AG04450 (cell line): ENCODE measurements at regions of chr14 and their contacts with region 1.

Region 1: DNA sequence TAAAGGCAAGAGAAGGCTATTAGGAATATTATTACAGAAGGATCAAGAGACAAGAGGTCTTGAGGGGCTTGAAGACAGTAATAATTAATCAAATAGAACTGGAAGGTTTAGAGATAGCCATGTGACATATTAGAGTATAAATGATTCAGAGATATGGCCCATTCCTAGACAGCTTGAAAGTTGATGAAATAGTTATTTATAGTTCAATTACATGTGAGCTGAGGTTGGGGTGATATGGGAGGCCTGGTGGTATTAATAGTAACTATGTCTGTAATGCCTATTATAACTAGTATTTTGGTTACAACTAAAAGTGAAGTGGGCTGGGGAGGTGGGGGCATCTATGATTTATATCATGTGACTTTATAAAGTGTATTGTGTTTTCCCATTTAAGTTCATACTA is 14.1 kb upstream of the MIS18BP1 start:
- DNase-seq: no peak
- H3K4me3 ChIP-seq: no peak overlapping the region
- H3K27ac ChIP-seq: no peak overlapping the region
- H3K27me3 ChIP-seq: peaks cover 5% of the 10 kb centered on the region
- CTCF ChIP-seq: no peak

Region 2: DNA sequence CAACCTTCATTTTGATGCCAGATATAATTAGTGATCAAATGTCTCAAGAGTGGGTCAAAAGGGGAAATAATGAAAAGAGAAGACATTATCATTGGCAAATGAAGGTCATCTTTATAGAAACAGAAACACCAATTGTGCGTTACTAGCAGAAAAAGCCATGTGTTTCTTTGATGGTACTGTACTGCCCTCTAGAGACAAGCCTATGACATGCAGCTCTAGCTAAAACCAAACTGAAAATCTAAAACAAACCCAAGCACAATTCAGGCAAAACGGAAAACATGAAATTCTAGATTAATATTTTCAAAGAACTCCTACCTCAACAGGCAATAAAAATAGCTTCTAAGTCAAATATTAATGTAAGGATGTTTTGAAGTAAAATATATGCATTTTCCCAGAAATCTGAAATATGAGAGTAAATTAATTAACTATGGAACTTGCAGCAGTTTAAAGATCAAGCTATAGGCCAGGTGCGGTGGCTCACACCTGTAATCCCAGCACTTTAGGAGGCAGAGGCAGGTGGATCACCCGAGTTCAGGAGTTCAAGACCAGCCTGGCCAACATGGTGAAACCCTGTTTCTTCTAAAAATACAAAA is 420.7 kb before region 1 on chr14:
- CTCF ChIA-PET with region 1: interaction called, 18 read pairs
- POLR2A ChIA-PET with region 1: no interaction called
- DNase-seq: peak; percentile 24
- H3K4me3 ChIP-seq: no peak overlapping the region
- H3K27ac ChIP-seq: no peak overlapping the region
- H3K27me3 ChIP-seq: no peaks in the 10 kb centered on the region
- CTCF ChIP-seq: peak; percentile 93

Region 3: DNA sequence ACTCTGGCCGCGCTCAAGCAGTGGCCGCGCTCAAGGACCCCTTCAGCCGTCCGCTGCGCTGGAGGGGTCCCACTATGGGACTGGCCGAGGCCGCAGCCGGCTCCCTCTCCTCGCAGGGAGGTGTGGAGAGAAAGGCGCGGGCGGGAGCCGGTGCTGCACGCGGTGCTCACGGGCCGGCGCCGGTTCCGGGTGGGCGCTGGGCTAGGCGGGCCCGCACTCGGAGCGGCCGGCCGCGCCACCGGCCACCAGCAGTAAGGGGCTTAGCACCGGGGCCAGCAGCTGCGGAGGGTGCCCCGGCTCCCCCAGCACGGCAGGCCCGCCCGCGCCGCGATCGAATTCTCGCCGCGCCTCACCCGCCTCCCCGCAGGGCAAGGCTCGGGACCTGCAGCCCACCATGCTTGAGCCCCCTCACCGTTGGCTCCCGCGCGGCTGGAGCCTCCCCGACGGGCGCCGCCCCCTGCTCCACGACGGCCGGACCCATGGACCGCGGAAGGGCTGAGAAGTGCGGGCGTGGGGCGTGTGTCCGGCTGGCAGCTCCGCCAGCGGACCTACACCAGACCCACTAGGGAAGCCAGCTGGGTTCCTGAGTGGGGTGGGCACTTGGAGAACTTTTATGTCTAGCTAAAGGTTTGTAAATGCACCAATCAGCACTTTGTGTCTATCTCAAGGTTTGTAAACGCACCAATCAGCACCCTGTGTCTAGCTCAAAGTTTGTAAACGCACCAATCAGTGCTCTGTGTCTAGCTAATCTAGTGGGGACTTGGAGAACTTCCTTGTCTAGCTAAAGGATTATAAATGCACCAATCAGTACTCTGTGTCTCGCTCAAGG is 354.8 kb before region 1 on chr14:
- CTCF ChIA-PET with region 1: interaction called, 84 read pairs
- POLR2A ChIA-PET with region 1: no interaction called
- DNase-seq: no peak
- H3K4me3 ChIP-seq: peak overlapping the region; percentile 44
- H3K27ac ChIP-seq: no peak overlapping the region
- H3K27me3 ChIP-seq: peaks cover 5% of the 10 kb centered on the region
- CTCF ChIP-seq: no peak

Region 4: GRCh38 chr14:45112889-45113781 is 153.9 kb before region 1 on chr14:
- CTCF ChIA-PET with region 1: interaction called, 11 read pairs
- POLR2A ChIA-PET with region 1: no interaction called
- DNase-seq: no peak
- H3K4me3 ChIP-seq: no peak overlapping the region
- H3K27ac ChIP-seq: no peak overlapping the region
- H3K27me3 ChIP-seq: no peaks in the 10 kb centered on the region
- CTCF ChIP-seq: no peak

Region 5: DNA sequence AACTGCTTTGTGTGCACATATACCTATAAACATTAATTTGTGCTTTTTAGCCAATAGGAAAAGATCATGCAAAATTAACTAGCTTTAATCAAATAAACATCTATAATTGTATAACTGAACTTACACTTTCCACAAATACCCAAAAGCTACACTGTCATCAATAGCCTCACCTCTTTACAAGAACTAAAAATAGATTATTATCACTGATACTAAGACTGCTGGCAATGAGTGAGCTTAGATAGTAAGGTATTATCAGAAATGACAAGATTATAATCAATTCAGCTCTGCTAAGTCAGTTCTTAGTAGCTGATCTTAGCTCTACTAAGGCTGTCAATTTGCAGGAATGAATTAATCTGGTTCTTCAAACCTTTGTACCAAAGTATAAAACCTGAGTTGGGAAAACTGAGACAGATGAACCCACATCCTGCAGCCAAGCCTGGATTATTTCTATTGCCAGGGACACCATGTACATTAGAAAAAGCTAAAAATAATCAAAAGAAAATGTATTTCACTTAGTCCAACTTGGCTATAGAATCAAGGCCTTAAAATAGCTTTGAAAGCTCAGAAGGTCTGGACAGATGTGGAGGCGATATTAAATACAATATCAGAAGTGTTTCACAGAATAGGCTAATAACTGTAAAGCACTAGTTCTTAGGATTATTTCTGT is 138.0 kb before region 1 on chr14:
- CTCF ChIA-PET with region 1: interaction called, 24 read pairs
- POLR2A ChIA-PET with region 1: interaction called, 3 read pairs
- DNase-seq: no peak
- H3K4me3 ChIP-seq: no peak overlapping the region
- H3K27ac ChIP-seq: no peak overlapping the region
- H3K27me3 ChIP-seq: no peaks in the 10 kb centered on the region
- CTCF ChIP-seq: no peak

Region 6: GRCh38 chr14:45134051-45134958 is 132.8 kb before region 1 on chr14 and contains the start of gene FKBP3:
- CTCF ChIA-PET with region 1: interaction called, 24 read pairs
- POLR2A ChIA-PET with region 1: interaction called, 3 read pairs
- DNase-seq: peak; percentile 97
- H3K4me3 ChIP-seq: peak within 1 kb of the TSS; percentile 92
- H3K27ac ChIP-seq: peak within 1 kb of the TSS; percentile 72
- H3K27me3 ChIP-seq: no peaks in the 10 kb centered on the region
- CTCF ChIP-seq: peak; percentile 24; the same call in 1 of the 2 replicates
- polyA plus RNA-seq, gene FKBP3: 55.3 and 105 TPM in 2 replicates

Region 7: DNA sequence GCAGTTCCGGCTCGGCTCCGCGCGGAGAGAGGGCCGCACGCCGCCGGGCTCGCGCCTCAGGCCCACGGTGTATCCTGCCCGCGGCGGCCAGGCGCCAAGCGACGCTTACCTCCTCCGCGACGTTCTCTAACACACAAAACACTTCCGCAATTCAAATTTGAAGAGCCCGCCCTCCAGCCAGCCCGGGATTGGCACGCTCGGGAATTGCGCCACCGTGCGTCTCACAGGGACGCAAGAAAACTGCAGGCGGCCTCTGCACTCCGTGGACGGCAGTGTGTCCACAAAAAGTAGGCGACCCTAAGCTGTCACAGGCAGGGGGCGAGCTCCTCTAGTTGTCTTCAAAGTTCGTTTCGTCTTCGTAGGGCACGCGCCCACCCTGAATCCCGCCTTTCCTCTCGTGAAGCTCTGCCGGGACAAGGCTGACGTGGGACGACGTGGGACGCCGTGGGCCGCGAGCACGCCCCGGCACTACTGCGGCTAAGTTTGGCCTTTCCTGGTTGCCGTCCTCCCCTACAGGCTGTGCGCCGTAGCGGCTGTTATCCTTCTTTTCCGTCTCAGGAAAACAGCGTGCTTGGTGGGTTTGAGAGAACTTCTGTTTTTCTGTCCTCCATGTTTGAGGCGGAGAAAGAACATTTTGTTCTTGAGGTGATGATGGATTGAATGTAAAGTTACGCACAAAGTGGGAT is 13.9 kb before region 1 on chr14 and contains the start of gene MIS18BP1:
- CTCF ChIA-PET with region 1: interaction called, 33 read pairs
- POLR2A ChIA-PET with region 1: no interaction called
- DNase-seq: peak; percentile 87
- H3K4me3 ChIP-seq: peak within 1 kb of the TSS; percentile 87
- H3K27ac ChIP-seq: peak within 1 kb of the TSS; percentile 94
- H3K27me3 ChIP-seq: no peaks in the 10 kb centered on the region
- CTCF ChIP-seq: peak; percentile 71
- polyA plus RNA-seq, gene MIS18BP1: 8.9 and 12.9 TPM in 2 replicates